ENCODE measurements at regions of chr11 and their contacts with region 1.

Region 1: DNA sequence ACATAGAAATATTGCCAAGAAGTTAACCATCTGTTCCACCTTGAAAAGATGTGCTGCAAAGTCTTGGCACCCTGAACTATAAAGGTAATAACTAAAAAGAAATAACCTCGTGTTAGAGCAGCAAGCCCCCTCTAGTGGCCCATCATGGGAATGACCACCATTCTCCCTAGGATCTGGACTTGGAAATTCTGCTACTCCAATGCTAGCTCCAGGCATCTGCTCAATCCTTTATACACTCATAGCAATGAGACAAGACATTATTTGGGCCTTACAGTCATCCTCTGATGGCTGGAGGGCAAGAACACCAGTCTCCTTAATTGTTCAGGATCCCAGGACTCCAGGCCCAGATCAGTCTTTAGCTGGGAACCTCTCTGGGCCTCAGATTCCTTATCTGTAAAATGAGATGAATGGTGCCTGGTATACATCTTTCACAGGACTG is 76.0 kb downstream of the CWC15 start:
- DNase-seq: peak; percentile 67 to 77
- H3K4me3 ChIP-seq: no peak overlapping the region
- H3K27ac ChIP-seq: no peak overlapping the region
- H3K4me1 ChIP-seq: no peaks in the 10 kb centered on the region
- H3K27me3 ChIP-seq: no peaks in the 10 kb centered on the region
- CTCF ChIP-seq: peak in 5 of 7 experiments; percentile 56 to 89 (median 86)
- EP300 ChIP-seq: no peak
- POLR2A ChIP-seq: no peak

Region 2: GRCh38 chr11:94786264-94787126 is 110.9 kb before region 1 on chr11:
- intact Hi-C with region 1: loop called (anchors 5 kb)
- DNase-seq: peak in 1 of 2 donors; percentile 73
- H3K4me3 ChIP-seq: no peak overlapping the region
- H3K27ac ChIP-seq: no peak overlapping the region
- H3K4me1 ChIP-seq: peaks cover 7 to 90% (median 46%) of the 10 kb centered on the region in 4 donors
- H3K27me3 ChIP-seq: no peaks in the 10 kb centered on the region
- CTCF ChIP-seq: peak in 5 of 7 experiments; percentile 29 to 67 (median 62)
- EP300 ChIP-seq: no peak
- POLR2A ChIP-seq: no peak

Region 3: DNA sequence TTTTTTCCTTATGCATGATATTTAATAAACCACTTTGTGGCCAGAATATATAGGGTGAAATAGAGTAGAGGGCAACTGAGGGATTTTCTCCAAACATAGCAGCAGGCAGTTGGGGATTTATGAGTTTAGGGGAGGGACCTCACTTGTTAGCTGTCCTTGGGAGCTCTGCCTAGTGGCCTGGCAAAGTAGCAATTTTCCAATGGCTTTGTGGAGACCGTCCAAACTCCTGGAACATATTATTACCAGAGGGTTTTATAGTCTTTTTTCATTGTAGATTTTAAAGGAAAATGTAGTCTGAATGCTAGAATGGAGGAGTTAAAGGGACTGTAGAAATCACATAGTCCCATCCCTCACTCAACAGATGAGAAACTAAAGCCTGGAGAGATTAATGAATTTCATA is 96.9 kb before region 1 on chr11:
- intact Hi-C with region 1: no loop called
- DNase-seq: peak in 1 of 2 donors; percentile 67
- H3K4me3 ChIP-seq: no peak overlapping the region
- H3K27ac ChIP-seq: peak overlapping the region in 2 of 5 donors; percentile 16 to 52
- H3K4me1 ChIP-seq: peaks cover 7 to 71% (median 29%) of the 10 kb centered on the region in 4 donors
- H3K27me3 ChIP-seq: no peaks in the 10 kb centered on the region
- CTCF ChIP-seq: no peak
- EP300 ChIP-seq: no peak
- POLR2A ChIP-seq: no peak